B cell (primary cell): ENCODE measurements at regions of chr6 and their contacts with region 1.

Region 1: GRCh38 chr6:99746261-99746895 is 139.7 kb downstream of the PRDM13 start:
- DNase-seq: peak; percentile 74
- ATAC-seq: peak; percentile 73
- H3K4me3 ChIP-seq: no peak overlapping the region
- H3K4me3 Mint-ChIP-seq: no peak overlapping the region
- H3K27ac ChIP-seq: no peak overlapping the region
- H3K27ac Mint-ChIP-seq: no peak overlapping the region
- H3K4me1 ChIP-seq: no peaks in the 10 kb centered on the region
- H3K4me1 Mint-ChIP-seq: no peaks in the 10 kb centered on the region
- H3K27me3 ChIP-seq: peaks cover 0 to 7% (median 1%) of the 10 kb centered on the region in 4 experiments
- H3K27me3 Mint-ChIP-seq: peaks cover 14% of the 10 kb centered on the region
- CTCF ChIP-seq: peak; percentile 94

Region 2: DNA sequence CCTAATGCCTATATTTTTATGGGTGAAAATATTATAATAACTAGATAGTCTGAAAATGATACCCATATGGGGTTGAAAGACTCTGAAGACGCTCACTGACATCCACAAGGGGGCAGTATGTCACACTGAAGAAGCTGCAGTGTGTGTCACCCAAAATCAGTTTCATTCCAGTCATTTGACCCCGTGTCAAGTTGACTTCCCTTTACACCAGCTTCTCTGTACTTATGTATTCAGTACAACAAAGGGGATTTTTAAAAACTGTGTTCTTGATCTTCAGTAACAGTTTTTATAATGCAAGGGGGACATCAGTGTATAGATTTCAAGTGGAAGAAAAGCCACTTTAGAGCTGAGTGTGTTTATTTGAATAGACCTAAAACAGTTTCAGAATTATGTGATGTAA is 416.2 kb before region 1 on chr6:
- CTCF ChIA-PET with region 1: interaction called, 3 read pairs
- POLR2A ChIA-PET with region 1: no interaction called
- intact Hi-C with region 1: loop called (anchors 2 kb)
- DNase-seq: peak; percentile 72
- ATAC-seq: peak; percentile 76
- H3K4me3 ChIP-seq: no peak overlapping the region
- H3K4me3 Mint-ChIP-seq: no peak overlapping the region
- H3K27ac ChIP-seq: no peak overlapping the region
- H3K27ac Mint-ChIP-seq: no peak overlapping the region
- H3K4me1 ChIP-seq: peaks cover 0 to 3% of the 10 kb centered on the region in 2 donors
- H3K4me1 Mint-ChIP-seq: peaks cover 12% of the 10 kb centered on the region
- H3K27me3 ChIP-seq: peaks cover 0 to 2% (median 1%) of the 10 kb centered on the region in 4 experiments
- H3K27me3 Mint-ChIP-seq: no peaks in the 10 kb centered on the region
- CTCF ChIP-seq: peak; percentile 89

Region 3: GRCh38 chr6:99434702-99435530 is 311.5 kb before region 1 on chr6:
- CTCF ChIA-PET with region 1: interaction called, 19 read pairs
- POLR2A ChIA-PET with region 1: no interaction called
- intact Hi-C with region 1: loop called (anchors 1 kb)
- DNase-seq: peak; percentile 53
- ATAC-seq: peak; percentile 66
- H3K4me3 ChIP-seq: no peak overlapping the region
- H3K4me3 Mint-ChIP-seq: no peak overlapping the region
- H3K27ac ChIP-seq: no peak overlapping the region
- H3K27ac Mint-ChIP-seq: no peak overlapping the region
- H3K4me1 ChIP-seq: no peaks in the 10 kb centered on the region
- H3K4me1 Mint-ChIP-seq: peaks cover 2% of the 10 kb centered on the region
- H3K27me3 ChIP-seq: no peaks in the 10 kb centered on the region
- H3K27me3 Mint-ChIP-seq: no peaks in the 10 kb centered on the region
- CTCF ChIP-seq: peak; percentile 83

Region 4: DNA sequence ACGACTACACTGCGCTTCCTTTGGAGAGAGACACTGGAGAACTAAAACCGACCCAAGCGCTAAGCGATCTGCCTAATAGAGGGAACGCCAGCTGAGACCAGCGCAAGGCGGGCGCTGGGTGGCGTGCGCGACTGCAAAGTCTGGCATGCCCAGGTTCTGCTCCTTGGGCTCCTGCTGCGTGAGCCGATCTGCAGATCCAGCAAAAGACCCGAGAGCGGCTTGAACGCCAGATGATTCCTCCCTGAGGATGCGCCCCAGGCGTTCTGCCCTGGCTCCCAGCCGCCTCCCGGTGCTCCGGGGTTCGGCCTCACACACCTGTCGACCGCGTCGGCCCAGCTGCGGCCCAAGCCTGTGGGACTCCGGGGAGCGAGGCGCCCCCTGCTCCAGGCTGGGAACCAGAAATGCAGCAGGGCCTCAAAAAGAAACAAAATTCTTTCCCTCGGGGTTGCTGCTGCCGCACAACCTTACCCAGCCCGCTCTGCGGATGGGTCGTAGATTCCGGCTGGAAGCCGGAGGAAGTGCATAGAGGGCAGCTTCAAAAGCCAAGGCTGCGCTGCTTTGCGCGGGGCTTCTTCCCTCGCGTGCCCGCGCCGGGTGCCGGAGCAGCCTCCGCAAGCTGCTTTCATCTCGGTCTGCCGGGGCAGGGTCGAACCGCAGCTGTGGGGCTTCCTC is 157.6 kb before region 1 on chr6:
- CTCF ChIA-PET with region 1: interaction called, 30 read pairs
- POLR2A ChIA-PET with region 1: no interaction called
- intact Hi-C with region 1: loop called (anchors 1 kb)
- DNase-seq: peak; percentile 76
- ATAC-seq: peak; percentile 76
- H3K4me3 ChIP-seq: peak overlapping the region; percentile 39 to 76 (median 58)
- H3K4me3 Mint-ChIP-seq: peak overlapping the region; percentile 92
- H3K27ac ChIP-seq: no peak overlapping the region
- H3K27ac Mint-ChIP-seq: peak overlapping the region; percentile 70
- H3K4me1 ChIP-seq: peaks cover 29 to 33% of the 10 kb centered on the region in 2 donors
- H3K4me1 Mint-ChIP-seq: peaks cover 30% of the 10 kb centered on the region
- H3K27me3 ChIP-seq: peaks cover 5 to 55% (median 47%) of the 10 kb centered on the region in 4 experiments
- H3K27me3 Mint-ChIP-seq: peaks cover 57% of the 10 kb centered on the region
- CTCF ChIP-seq: peak; percentile 29